Left colon (tissue), 2 donors: ENCODE measurements at regions of chr3 and their contacts with region 1.

Region 1: DNA sequence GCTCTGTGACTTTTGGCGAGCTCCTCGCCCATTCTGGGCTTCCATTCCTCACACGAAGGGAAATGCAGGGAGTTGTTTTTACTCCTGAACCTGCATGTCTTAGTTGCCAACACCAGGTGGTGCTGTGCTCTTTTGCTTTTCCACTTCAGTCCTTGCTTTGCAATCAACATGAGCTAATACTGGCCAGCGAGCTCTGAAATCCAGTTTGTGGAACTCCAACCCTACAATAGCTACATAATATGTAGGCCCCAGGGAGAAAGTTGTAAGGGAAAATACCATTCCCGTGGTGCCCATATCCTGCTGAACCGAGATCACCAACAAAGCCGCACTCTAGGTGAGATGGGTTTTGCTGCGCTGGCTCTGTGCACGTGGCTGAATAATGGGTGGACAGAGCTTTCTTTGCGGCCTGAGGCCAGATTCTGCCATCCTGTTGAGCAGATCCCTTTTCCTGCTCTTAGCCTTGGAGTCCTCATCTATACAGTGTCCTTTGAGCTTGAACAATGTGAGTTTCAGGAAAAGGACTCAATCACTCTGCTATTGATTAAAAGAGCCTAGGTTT is 25.0 kb downstream of the LSM3 start:
- DNase-seq: peak; percentile 57 to 60
- ATAC-seq: peak; percentile 71

Region 2: GRCh38 chr3:14467814-14468620 is 264.4 kb after region 1 on chr3:
- intact Hi-C with region 1: loop called in 1 of 2 experiments (anchors 5 kb)
- DNase-seq: no peak
- ATAC-seq: peak; percentile 69

Region 3: DNA sequence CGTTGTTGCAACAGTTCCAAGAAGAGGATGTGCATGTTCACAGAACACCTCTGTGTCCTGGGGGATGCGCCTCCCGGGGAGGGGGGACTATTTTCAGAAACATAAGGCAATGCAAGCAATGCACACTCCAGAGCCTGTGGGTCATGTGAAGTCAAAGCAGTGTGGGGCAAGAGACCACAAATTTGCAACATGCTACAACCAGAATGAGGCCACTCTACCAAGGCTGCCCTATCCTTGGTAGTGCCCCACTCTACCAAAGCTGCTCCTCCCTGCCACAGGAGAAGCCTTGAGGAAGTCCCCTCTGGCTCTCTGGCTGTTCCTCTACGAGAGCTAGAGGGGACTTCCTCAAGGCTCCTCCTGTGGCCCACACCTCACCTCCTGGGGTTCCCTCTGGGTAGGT is 735.4 kb after region 1 on chr3:
- intact Hi-C with region 1: no loop called
- DNase-seq: no peak
- ATAC-seq: no peak